Right lobe of liver (tissue), 6 donors: ENCODE measurements at regions of chr4 and their contacts with region 1.

Region 1: DNA sequence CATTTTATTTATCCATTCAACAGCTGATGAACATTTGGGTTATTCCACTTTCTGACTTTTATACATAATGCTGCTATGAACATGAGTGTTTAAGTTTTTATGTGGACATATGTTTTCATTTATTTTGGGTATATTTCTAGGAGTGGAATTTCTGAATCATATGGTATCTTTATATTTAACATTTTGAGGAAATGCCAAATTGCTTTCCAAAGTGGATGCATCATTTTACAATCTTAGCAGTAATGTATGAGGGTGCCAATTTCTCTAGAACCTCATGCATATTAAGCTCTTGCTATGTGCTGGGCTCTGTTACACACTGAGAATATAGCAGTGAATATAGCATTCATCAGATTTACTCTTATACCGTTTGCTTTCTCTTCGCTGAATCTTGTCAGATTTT is 983.7 kb downstream of the STIM2 start:
- DNase-seq: no peak
- ATAC-seq: no peak
- H3K4me3 ChIP-seq: no peak overlapping the region
- H3K27ac ChIP-seq: no peak overlapping the region
- H3K4me1 ChIP-seq: no peaks in the 10 kb centered on the region
- H3K27me3 ChIP-seq: no peaks in the 10 kb centered on the region
- CTCF ChIP-seq: no peak
- POLR2A ChIP-seq: no peak

Region 2: GRCh38 chr4:28209371-28209924 is 365.1 kb after region 1 on chr4:
- intact Hi-C with region 1: loop called in 1 of 2 experiments (anchors 10 kb)
- DNase-seq: no peak
- ATAC-seq: no peak
- H3K4me3 ChIP-seq: no peak overlapping the region
- H3K27ac ChIP-seq: no peak overlapping the region
- H3K4me1 ChIP-seq: no peaks in the 10 kb centered on the region
- H3K27me3 ChIP-seq: no peaks in the 10 kb centered on the region
- CTCF ChIP-seq: no peak
- POLR2A ChIP-seq: no peak